Right ventricle myocardium inferior (tissue), 1 donor: ENCODE measurements at regions of chr4 and their contacts with region 1.

Region 1: DNA sequence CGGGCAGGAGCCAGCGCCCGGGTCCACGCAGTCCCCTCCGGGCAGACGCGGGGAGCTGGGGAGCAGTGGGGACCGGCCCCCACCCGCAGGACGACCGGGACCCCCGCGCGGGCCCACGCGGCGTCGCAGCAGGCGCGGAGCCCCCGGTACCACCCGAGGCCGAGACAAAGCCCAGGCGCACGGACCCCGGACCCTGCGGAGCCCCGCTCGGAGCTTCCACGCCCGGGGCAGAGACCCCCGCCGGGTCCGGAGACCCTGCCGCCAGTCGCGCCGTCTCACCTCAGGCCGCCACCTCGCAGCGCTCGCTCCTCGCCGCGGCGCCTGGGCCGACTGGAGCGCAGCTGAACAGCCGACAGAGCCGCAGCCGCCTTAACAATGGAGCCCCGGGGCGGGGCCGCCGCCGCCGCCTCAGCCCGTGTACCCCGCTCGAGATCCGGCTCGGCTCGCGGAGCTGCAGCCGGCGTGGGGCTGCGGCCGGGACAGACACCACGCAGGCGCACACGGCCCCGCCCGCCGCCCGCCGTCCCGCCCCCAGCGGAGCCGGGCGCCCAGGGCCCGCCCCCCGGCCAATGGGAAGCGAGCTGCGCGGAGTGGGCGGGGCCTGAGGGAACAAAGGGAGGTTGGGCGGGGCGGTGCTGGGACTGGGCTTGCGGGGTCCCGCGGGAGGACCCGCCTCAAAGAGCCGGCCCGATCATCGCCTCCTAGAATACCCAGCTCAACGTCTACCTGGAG is at the start of gene AFAP1:
- DNase-seq: peak; percentile 94
- ATAC-seq: peak; percentile 98
- total RNA-seq, gene AFAP1: 8.0 TPM

Region 2: GRCh38 chr4:7506119-7506518 is 433.4 kb before region 1 on chr4:
- intact Hi-C with region 1: no loop called
- DNase-seq: no peak
- ATAC-seq: no peak

Region 3: GRCh38 chr4:7876201-7876875 is 63.2 kb before region 1 on chr4:
- intact Hi-C with region 1: loop called (anchors 5 kb)
- DNase-seq: no peak
- ATAC-seq: peak; percentile 24